ENCODE measurements at regions of chr2 and their contacts with region 1.

Region 1: GRCh38 chr2:10043906-10044601 is 704 bp downstream of the KLF11 start:
- DNase-seq: peak; percentile 93
- H3K4me3 ChIP-seq: peak overlapping the region; percentile 64
- H3K27ac ChIP-seq: peak overlapping the region; percentile 59
- H3K4me1 ChIP-seq: peaks cover 8% of the 10 kb centered on the region
- CTCF ChIP-seq: no peak

Region 2: GRCh38 chr2:9630749-9631483 is 413.1 kb before region 1 on chr2 and contains the start of gene YWHAQ:
- CTCF ChIA-PET with region 1: no interaction called
- POLR2A ChIA-PET with region 1: no interaction called
- intact Hi-C with region 1: loop called (anchors 5 kb)
- DNase-seq: peak; percentile 99
- H3K4me3 ChIP-seq: peak within 1 kb of the TSS; percentile 89
- H3K27ac ChIP-seq: peak within 1 kb of the TSS; percentile 75
- H3K4me1 ChIP-seq: peaks cover 32% of the 10 kb centered on the region
- CTCF ChIP-seq: no peak
- total RNA-seq, gene YWHAQ: 152 and 181 TPM in 2 replicates

Region 3: DNA sequence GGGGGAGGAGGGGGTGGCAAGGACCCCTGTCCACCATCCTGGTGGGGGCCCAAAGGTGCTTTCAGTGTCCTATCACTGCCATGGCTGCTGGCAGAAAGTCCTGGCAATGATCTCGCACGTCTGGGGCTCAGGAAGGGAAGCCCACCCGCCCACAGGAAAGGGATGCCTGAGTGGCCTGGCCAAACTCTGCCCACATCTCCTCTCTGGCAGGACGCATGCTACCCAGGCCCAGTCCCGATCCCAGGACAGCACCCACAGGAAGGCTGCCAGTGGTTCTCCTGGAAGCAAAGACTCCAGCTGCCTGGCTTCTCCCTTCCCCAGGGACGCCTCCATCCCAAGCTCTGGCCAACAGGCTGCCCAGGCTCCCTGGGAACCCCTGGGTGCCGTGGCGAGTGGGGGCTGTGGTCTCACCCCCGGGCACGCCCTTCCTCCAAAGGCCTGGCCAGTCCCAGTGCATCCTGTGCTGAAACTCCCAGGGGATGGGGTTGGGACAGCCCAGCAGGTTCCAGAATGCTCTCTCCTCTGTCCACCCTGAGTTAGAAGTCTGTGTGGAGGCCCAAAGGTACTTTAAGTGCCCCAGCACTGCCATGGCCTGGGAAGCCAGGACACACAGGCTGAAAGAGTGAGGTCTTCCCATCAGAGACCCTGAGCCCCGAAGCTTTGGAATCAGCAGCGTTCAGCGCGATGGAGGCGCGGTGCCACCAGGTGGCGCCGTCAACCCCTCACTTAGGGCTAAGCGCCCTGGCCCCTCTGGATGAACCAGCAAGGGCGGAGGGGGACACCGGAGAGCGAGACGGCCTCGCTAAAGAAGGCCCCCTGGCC is 230.5 kb before region 1 on chr2:
- CTCF ChIA-PET with region 1: no interaction called
- POLR2A ChIA-PET with region 1: no interaction called
- intact Hi-C with region 1: loop called (anchors 1 kb)
- DNase-seq: peak; percentile 70
- H3K4me3 ChIP-seq: no peak overlapping the region
- H3K27ac ChIP-seq: no peak overlapping the region
- H3K4me1 ChIP-seq: no peaks in the 10 kb centered on the region
- CTCF ChIP-seq: peak; percentile 98

Region 4: GRCh38 chr2:9984217-9984739 is 59.8 kb before region 1 on chr2:
- CTCF ChIA-PET with region 1: interaction called, 3 read pairs
- POLR2A ChIA-PET with region 1: interaction called, 10 read pairs
- intact Hi-C with region 1: loop called (anchors 2 kb)
- DNase-seq: peak; percentile 56
- H3K4me3 ChIP-seq: no peak overlapping the region
- H3K27ac ChIP-seq: no peak overlapping the region
- H3K4me1 ChIP-seq: no peaks in the 10 kb centered on the region
- CTCF ChIP-seq: peak; percentile 89

Region 5: GRCh38 chr2:10095175-10095574 is 51.1 kb after region 1 on chr2:
- CTCF ChIA-PET with region 1: no interaction called
- POLR2A ChIA-PET with region 1: no interaction called
- intact Hi-C with region 1: no loop called
- DNase-seq: no peak
- H3K4me3 ChIP-seq: no peak overlapping the region
- H3K27ac ChIP-seq: no peak overlapping the region
- H3K4me1 ChIP-seq: peaks cover 4% of the 10 kb centered on the region
- CTCF ChIP-seq: no peak

Region 6: DNA sequence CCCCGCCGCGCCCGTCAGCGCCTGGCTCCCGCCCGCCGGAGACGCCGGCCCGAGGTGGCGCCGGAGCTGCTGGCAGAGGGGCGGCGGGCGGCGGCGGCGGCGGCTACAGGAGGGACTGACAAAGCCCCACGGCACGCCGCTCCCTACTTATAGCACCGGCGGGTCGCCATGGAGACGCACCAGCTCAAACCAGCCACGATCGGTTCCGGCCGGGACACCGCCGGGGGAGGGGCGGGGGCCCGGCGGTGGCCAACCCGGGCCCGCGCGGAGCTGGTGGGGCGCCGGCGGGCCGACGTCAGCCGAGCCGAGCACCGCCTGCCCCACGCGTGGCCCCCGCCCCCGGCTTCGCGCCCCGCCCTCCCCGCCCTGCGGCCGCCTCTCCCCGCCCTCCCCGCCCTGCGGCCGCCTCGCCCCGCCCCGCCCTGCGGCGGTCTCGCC is 404.2 kb after region 1 on chr2 and contains the start of gene ODC1:
- CTCF ChIA-PET with region 1: no interaction called
- POLR2A ChIA-PET with region 1: no interaction called
- intact Hi-C with region 1: loop called (anchors 10 kb)
- DNase-seq: peak; percentile 94
- H3K4me3 ChIP-seq: peak within 1 kb of the TSS; percentile 88
- H3K27ac ChIP-seq: peak within 1 kb of the TSS; percentile 85
- H3K4me1 ChIP-seq: peaks cover 26% of the 10 kb centered on the region
- CTCF ChIP-seq: no peak
- total RNA-seq, gene ODC1: 273 and 306 TPM in 2 replicates